SK-N-SH (cell line): ENCODE measurements at regions of chr14 and their contacts with region 1.

Region 1: DNA sequence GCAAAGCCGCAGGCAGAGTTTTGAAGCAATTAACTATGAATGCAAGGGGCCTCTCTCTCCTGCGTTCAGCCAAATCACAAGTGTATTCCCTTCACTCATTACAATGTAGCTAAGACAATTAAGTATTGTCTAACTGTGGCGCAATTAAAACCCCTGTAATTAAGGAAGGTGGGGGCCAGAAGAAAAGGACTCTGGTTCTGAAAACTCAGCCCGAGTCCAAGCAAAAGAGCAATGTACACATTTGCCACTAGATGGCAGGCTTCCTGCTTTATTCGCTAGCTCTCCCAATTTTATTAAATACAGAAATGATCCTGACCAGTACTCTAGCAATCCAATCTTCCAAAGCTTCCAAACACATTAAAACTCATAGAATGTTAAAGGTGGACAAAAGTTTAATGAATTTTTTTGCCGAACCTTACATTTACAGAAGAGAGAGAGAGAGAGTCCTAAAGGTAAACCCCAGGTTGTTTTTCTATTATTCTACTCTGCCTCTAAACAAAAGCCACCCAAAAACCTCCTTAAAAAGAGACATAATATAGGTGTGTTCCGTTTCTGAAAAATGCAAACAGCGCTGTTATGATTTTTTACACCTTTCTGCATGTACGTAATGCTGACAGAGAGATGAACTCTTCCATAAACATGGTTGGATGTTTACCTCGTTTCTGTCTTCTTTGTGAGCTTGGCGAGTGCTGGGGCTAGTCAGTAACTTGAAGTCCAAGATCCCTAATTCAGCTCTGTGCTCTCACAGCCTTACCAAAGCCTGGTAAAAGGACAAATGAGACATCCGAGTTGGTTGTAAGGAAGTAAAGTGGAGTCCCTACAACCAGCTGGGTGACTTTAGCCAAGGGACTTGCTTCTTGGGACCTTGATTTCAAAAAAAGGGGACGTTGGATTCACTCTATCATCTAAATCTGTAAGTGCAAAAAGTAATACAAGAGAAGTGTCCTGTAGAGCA is 50.9 kb upstream of the VASH1 start:
- DNase-seq: peak; percentile 68
- H3K4me3 ChIP-seq: no peak overlapping the region
- H3K27ac ChIP-seq: no peak overlapping the region
- H3K4me1 ChIP-seq: peaks cover 0 to 1% of the 10 kb centered on the region in 2 experiments; a peak in 1 of 4 replicates
- H3K27me3 ChIP-seq: no peaks in the 10 kb centered on the region; the same call in 1 of the 2 replicates
- CTCF ChIP-seq: peak; percentile 91
- EP300 ChIP-seq: no peak
- RAD21 ChIP-seq: peak; percentile 82

Region 2: DNA sequence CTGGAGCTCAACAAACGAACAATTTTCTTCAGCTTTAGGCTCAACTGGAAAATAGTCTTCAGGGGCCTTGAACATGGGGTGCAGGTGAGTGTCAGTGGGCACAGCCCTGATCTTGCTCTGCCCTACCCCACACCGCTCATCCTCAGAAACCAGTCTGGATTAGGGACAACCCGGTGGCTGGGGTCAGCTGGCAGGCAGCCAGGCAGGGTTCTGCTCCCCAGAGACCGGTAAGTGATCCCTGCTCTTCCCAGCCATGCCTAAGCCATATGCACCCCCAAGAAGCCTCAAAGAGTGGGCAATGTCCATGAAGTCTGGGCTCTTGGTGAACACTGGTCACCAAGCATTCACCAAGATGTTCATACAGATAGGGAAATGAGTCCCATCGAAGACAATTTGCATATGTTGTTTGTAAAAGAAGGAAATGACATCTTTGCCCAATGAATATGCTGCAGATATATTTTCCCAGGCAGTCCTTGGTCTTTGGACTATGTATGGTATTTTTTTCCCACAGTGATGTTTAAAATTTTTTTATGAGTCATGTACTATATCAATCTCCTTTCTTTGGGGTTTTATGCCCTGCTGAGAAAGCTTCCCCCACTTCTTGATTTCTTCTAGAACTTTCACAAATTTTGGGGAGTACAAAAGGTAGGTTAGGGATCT is 13.0 kb before region 1 on chr14:
- CTCF ChIA-PET with region 1: interaction called, 22 read pairs
- POLR2A ChIA-PET with region 1: interaction called, 3 read pairs
- DNase-seq: no peak
- H3K4me3 ChIP-seq: no peak overlapping the region
- H3K27ac ChIP-seq: no peak overlapping the region
- H3K4me1 ChIP-seq: peaks cover 0 to 3% of the 10 kb centered on the region in 2 experiments; a peak in 1 of 4 replicates
- H3K27me3 ChIP-seq: no peaks in the 10 kb centered on the region; the same call in 1 of the 2 replicates
- CTCF ChIP-seq: no peak
- EP300 ChIP-seq: no peak
- RAD21 ChIP-seq: no peak

Region 3: DNA sequence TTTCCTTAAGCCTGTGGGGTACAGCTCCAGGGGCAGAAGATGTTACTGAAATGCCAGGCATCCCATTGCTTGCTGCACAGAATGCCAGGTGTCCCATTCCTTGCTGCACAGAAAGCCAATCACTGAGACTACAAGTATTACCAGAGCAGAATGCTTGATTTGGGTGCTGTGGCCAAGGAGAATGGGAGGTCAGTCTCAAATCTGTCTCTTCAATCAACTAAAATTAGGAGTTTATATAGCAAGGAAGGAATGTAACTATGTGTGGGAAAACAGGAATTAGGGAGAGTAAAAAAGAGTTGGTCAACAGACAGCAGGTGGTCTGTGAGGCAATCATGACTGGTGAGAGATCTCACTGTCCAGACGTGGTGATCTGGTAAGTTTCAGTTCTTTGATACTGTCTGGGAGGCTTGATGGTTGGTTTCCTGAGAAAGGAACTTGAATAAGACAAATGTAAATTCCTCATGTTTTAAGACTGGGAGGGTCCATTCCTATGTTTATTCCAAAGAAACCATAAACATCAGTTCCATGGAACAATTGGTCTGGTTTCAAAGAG is 19.7 kb after region 1 on chr14:
- CTCF ChIA-PET with region 1: interaction called, 12 read pairs
- POLR2A ChIA-PET with region 1: no interaction called
- DNase-seq: no peak
- H3K4me3 ChIP-seq: no peak overlapping the region
- H3K27ac ChIP-seq: no peak overlapping the region
- H3K4me1 ChIP-seq: no peaks in the 10 kb centered on the region
- H3K27me3 ChIP-seq: no peaks in the 10 kb centered on the region
- CTCF ChIP-seq: no peak
- EP300 ChIP-seq: no peak
- RAD21 ChIP-seq: no peak

Region 4: DNA sequence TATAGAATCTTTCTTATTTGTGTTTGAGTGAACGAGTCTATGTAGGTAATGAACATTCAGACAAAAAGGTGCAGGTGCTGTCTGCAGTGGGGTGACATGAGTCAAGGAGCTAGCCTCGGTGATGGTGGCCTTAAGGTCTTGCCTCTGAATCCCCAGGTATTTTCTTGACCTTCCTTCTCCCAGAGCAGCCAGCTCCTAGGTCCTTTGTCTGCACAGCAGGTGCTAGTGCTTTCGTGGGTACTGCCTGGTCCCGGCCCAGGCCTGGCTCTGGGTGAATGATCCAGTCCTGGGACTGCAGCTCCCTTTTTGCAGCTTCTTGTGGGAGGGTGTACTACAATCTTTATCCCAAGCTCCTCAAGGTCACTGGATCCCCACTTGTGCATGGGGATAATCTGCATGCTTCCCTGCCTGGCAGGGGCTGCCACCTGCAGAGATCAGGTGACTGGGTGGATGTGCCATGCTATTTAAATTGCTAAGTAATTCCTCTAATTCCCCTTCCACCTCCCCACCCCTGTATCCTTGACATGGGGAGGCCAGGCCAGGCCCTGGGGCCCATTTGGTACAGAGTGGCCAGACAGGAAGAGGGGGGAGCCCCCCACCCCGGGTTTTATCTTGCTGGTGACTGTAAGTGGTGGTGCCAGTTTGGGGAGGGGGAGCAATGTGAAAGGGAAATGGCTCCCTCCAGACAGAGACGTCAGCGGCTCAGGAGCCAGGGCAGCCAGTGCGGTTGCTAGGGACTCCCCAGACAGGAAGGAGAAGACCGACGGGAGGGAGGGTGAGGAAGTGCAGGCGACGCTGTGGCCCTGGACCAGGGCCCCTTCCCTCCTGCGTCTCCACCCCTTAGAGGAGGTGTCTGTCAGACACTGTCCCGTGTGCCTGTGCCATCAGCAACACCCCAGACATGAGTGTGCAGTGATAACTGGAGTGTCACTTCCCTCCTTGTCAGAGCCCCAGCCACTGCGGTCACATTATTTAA is 57.6 kb after region 1 on chr14:
- CTCF ChIA-PET with region 1: interaction called, 23 read pairs
- POLR2A ChIA-PET with region 1: no interaction called
- DNase-seq: peak; percentile 76
- H3K4me3 ChIP-seq: no peak overlapping the region
- H3K27ac ChIP-seq: peak overlapping the region in 1 of 2 experiments; percentile 75; a peak in 2 of 4 replicates
- H3K4me1 ChIP-seq: peaks cover 5 to 38% of the 10 kb centered on the region in 2 experiments; a peak in 2 of 4 replicates
- H3K27me3 ChIP-seq: no peaks in the 10 kb centered on the region
- CTCF ChIP-seq: no peak
- EP300 ChIP-seq: no peak
- RAD21 ChIP-seq: no peak

Region 5: DNA sequence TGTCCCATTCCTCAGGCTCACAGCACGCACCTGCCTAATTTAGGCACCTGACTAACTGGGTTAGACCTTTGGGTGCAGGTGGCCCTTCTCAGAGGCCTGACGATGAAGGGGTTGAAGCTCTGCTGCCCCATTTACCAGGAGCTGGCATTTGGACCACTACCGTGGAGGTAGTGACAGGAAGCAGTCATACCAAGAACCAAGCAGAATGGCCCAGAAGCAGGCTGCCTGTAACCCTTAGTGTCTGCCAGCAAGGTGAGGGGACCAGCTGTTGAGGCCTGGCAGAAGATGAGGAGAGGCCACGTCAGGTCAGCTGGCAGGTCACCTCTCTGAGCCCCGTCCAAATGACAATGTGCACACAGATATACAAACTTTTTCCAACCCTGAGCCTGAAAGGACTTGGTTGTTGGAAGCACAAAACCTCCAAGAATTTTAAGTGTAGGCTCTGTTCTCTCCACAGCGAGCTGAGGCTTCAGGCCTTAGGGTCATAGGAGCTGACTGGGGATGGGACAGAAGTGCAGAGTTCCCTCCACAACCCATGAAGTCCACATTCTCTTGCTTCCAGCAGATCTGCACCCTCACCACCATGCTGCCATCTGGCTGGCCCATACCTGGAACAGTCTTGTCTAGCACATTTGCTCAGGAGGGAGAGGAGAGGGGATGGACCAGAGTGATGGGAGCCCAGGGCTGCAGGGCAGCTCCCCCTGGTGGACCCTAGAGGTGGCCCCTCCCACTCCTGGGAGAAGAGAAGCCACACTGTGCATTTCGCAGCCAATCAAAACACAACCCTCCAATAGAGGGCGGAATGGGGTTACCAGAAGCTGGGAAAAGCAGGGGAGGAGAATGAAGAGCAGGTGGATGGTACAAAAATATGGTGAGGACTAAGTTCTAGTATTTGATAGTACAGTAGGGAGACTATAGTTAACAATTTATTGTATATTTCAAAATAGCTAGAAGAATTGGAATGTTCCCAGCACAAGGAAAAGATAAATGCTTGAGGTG is 74.2 kb after region 1 on chr14:
- CTCF ChIA-PET with region 1: interaction called, 147 read pairs
- POLR2A ChIA-PET with region 1: interaction called, 3 read pairs
- DNase-seq: peak; percentile 92
- H3K4me3 ChIP-seq: peak overlapping the region in 1 of 2 experiments; percentile 33; a peak in 1 of 4 replicates
- H3K27ac ChIP-seq: no peak overlapping the region; a peak in 1 of 4 replicates
- H3K4me1 ChIP-seq: peaks cover 14 to 33% of the 10 kb centered on the region in 2 experiments; a peak in 2 of 4 replicates
- H3K27me3 ChIP-seq: no peaks in the 10 kb centered on the region
- CTCF ChIP-seq: peak; percentile 94
- EP300 ChIP-seq: no peak; a peak in 1 of 4 replicates
- RAD21 ChIP-seq: peak; percentile 78

Region 6: DNA sequence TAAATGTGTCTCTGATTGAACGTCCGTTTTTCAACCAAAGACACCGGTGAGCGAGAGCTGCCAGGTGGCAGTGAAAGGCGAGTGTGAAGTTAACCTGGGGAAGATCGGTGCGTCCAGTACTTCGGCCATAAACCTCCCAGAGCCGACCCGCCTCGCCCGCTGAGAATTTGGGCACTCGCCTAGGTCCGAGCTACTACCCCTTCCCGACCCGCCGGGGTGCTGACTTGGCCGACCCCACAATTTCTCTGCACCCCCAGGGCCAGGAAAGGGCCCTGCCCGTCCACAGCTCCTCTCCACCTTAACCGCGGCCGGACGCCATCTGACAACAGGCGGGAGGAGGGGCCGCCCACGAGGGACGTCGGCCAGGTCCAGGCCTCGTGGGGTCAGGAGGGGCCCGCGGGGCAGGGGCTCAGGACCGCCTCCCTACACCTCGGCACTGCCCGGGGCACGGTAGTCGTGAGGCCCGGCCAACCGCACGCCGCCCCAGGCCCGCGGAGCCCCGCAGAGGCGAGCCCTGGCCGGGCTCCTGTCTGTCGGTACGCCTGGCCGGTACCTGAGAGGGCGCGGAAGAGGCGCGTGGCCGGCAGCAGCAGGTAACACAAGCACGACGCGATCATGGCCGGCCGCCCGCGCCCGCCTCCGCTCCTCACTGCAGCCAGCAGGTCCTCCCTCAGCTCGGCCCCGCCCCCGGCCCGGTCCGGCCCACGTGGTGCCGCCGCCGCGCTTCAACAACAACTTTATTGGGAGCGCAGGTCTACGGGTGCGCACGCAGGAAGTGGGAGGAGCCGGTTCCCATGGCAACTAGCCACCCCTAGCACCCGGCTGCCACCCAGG is 102.1 kb after region 1 on chr14 and contains the start of gene ANGEL1:
- CTCF ChIA-PET with region 1: interaction called, 112 read pairs
- POLR2A ChIA-PET with region 1: interaction called, 5 read pairs
- DNase-seq: peak; percentile 97
- H3K4me3 ChIP-seq: peak within 1 kb of the TSS; percentile 88 to 89
- H3K27ac ChIP-seq: peak within 1 kb of the TSS; percentile 7 to 72; a peak in 2 of 4 replicates
- H3K4me1 ChIP-seq: peaks cover 6 to 16% of the 10 kb centered on the region in 2 experiments; a peak in 3 of 4 replicates
- H3K27me3 ChIP-seq: peaks cover 3% of the 10 kb centered on the region
- CTCF ChIP-seq: no peak
- EP300 ChIP-seq: peak in 1 of 2 experiments; percentile 51; a peak in 1 of 4 replicates
- RAD21 ChIP-seq: no peak
- polyA plus RNA-seq, gene ANGEL1: 14.1 and 20.7 TPM in 2 replicates